Endothelial cell of umbilical vein (primary cell): ENCODE measurements at regions of chr2 and their contacts with region 1.

Region 1: DNA sequence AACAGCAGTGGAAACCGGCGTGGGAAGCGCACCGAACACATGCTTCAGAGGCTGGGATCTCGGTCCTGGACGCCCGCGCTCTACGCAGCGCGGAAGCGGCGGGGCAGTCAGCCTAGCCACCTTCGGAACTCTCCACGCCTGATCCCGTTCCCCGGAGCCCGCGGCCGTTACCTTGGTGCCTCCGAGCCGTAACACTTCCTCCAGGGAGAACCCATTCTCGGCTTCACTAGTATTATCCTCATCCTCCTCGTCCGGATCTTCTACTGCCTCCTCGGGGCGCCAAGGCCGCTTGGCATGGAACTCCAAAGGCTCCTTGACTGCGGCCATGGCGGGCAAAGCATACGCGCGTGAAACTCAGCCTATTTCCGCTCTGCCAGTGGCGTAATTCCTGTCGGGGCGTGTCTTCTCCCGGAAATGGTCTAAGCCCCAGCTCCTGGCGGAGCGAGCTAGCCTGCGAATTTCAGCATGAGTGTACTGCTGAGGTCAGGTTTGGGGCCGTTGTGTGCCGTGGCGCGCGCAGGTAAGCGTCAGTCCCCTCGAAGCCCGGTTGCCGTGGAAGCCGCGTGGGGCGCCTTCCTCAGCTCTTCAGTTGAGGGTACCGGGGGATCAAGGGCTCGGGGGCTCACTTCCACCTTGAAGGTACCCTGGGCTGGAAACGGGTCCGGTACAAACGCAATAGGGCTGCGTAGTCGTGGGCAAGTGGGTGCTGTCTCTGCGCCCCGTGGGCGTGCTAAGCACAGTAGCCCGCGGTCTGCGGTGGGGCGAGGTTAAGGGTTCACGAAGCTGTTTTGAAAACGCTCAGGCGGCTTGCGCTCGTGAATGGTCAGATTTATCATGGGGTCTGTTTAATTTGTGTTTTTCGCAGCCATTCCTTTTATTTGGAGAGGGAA is at the starts of genes CEBPZ and NDUFAF7:
- DNase-seq: peak; percentile 96
- H3K4me3 ChIP-seq: peak within 1 kb of the TSS; percentile 83 to 96 (median 90)
- H3K27ac ChIP-seq: peak within 1 kb of the TSS; percentile 79
- H3K4me1 ChIP-seq: peaks cover 22% of the 10 kb centered on the region
- H3K27me3 ChIP-seq: no peaks in the 10 kb centered on the region
- CTCF ChIP-seq: no peak
- POLR2A ChIP-seq: peak; percentile 85
- total RNA-seq, gene CEBPZ: 36.7 and 46.9 TPM in 2 replicates
- total RNA-seq, gene NDUFAF7: 17.7 and 23.4 TPM in 2 replicates

Region 2: DNA sequence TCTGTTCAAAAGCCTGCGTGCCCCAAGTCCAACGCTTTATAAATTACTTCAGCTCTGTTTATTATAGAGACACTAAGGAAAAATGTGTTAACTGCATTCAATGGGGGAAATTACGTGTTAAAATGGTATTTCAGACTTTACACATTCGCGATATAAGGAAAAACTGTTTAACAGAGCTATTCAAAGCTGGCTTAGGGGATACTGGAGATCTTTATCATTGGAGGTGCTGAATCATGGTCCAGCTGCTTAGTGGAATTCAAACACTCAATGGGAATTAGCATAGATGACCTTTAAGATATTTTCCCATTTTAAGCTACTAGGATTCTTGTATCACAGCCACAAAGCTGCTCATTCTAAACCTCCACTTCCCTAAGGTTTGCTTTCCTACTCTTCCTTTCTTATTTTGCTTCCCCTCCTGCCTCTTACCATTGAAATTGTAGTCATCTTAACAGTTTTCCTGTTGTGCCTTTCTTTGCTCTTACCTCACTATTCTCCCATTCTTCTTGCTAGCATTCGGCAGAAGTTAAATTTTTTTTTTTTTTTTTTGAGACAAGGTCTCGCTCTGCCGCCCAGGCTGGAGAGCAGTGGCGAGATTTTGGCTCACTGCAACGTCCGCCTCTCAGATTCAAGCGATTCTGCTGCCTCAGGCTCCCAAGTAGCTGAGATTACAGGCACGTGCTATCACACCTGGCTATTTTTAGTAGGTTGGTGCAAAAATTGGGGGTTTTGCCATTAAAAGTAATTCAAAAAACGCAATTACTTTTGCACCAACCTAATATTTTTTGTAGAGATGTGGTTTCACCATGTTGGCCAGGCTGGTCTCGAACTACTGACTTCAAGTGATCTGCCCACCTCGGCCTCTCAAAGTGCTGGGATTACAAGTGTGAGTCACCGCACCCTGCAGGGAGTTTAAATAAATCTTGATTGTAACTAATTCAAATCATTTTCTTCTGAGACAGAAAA is 49.5 kb before region 1 on chr2:
- CTCF ChIA-PET with region 1: interaction called, 5 read pairs
- POLR2A ChIA-PET with region 1: no interaction called
- dilution Hi-C with region 1: no loop called
- intact Hi-C with region 1: loop called (anchors 1 kb)
- DNase-seq: peak; percentile 88
- H3K4me3 ChIP-seq: no peak overlapping the region
- H3K27ac ChIP-seq: peak overlapping the region; percentile 71
- H3K4me1 ChIP-seq: peaks cover 10% of the 10 kb centered on the region
- H3K27me3 ChIP-seq: peaks cover 0 to 4% of the 10 kb centered on the region in 2 experiments
- CTCF ChIP-seq: no peak
- POLR2A ChIP-seq: no peak